AG04450 (cell line): ENCODE measurements at regions of chr20 and their contacts with region 1.

Region 1: GRCh38 chr20:34312544-34313217 is 9.5 kb upstream of the AHCY start:
- DNase-seq: peak; percentile 69
- H3K4me3 ChIP-seq: peak overlapping the region; percentile 51
- H3K27ac ChIP-seq: no peak overlapping the region
- H3K27me3 ChIP-seq: no peaks in the 10 kb centered on the region
- CTCF ChIP-seq: peak; percentile 100

Region 2: GRCh38 chr20:34334654-34335407 is 22.1 kb after region 1 on chr20:
- CTCF ChIA-PET with region 1: interaction called, 23 read pairs
- POLR2A ChIA-PET with region 1: no interaction called
- DNase-seq: no peak
- H3K4me3 ChIP-seq: no peak overlapping the region
- H3K27ac ChIP-seq: no peak overlapping the region
- H3K27me3 ChIP-seq: no peaks in the 10 kb centered on the region
- CTCF ChIP-seq: no peak

Region 3: DNA sequence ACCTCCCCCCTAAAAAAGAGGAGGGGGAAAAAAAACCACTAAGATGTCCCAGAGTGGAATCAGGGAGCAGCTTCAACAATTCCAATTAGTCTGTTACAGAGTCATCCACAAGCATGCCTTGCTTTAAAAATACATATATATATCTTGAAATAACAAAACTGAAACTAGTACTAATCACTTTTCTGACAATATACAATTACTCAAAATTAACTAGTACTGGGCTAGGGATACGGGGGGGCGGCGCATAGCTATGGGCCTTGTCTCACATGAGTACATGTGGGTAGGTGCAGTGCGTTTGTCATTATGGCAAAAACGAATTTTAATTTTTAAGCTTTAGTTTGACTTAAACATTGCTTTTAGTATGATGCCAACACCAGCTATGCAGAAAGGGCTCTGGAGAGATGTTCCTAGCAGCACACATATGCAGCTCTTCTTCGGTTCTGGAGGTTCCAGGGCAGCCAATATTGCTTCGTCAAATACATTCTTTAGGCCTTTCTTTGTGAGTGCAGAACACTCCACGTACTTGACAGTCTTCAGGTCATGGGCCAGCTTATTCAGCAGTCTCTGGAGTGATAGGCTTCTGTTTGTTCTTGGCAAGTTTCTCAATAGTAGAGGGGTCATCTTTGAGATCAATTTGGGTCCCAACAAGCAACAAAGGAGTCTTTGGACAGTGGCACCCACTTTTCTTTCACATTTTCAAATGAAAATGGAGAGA is 89.2 kb after region 1 on chr20:
- CTCF ChIA-PET with region 1: interaction called, 37 read pairs
- POLR2A ChIA-PET with region 1: no interaction called
- DNase-seq: no peak
- H3K4me3 ChIP-seq: no peak overlapping the region
- H3K27ac ChIP-seq: no peak overlapping the region
- H3K27me3 ChIP-seq: no peaks in the 10 kb centered on the region
- CTCF ChIP-seq: no peak

Region 4: DNA sequence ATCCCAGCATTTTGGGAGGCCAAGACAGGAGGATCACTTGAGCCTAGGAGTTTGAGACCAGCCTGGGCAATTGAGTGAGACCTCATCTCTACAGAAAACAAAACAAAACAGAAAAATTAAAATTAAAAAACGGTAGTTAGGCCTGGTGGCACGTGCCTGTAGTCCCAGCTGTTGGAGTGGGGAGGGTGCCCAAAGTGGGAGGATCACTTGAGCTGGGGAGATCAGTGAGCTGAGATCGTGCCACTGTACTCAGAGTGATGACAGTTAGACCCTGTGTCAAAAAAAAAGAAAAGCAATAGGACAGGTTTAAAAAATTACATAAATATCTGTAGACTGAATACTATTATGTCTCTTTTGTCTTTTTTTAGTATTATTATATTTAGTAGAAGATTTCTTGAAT is 114.7 kb after region 1 on chr20:
- CTCF ChIA-PET with region 1: interaction called, 18 read pairs
- POLR2A ChIA-PET with region 1: no interaction called
- DNase-seq: no peak
- H3K4me3 ChIP-seq: no peak overlapping the region
- H3K27ac ChIP-seq: no peak overlapping the region
- H3K27me3 ChIP-seq: no peaks in the 10 kb centered on the region
- CTCF ChIP-seq: no peak

Region 5: DNA sequence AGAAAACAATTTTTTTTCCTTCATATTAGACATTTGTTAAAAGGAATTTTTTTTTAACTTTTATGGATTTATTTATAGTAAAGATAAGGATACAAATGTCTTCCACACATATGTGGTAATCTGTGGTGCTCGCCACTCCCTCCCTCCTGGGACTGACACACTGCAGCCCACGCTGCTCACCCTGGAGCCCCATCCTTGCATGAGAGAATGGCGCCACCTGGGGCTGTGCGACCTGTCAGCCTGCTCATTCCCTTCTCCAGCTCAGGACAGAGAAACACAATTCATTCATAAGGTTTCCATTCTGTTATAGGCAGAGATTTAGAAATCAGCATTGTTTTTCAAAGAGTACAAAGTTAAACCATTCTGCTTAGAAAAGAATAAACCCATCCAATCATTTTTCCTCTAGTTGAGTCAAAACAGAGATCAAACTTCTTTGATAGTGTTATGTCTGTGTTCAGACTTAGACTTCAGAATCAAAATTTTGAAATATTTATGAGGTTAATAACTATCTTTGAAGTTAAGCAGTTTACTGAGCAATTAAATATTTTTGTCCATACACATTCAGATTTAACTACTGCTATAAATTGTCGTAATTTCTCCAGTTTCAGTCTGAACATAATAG is 160.7 kb after region 1 on chr20:
- CTCF ChIA-PET with region 1: interaction called, 34 read pairs
- POLR2A ChIA-PET with region 1: no interaction called
- DNase-seq: no peak
- H3K4me3 ChIP-seq: no peak overlapping the region
- H3K27ac ChIP-seq: no peak overlapping the region
- H3K27me3 ChIP-seq: no peaks in the 10 kb centered on the region
- CTCF ChIP-seq: peak; percentile 44

Region 6: GRCh38 chr20:34522969-34523871 is 210.5 kb after region 1 on chr20:
- CTCF ChIA-PET with region 1: interaction called, 66 read pairs
- POLR2A ChIA-PET with region 1: no interaction called
- DNase-seq: peak; percentile 42
- H3K4me3 ChIP-seq: no peak overlapping the region
- H3K27ac ChIP-seq: peak overlapping the region; percentile 83
- H3K27me3 ChIP-seq: no peaks in the 10 kb centered on the region
- CTCF ChIP-seq: peak; percentile 65